Posterior cingulate gyrus (tissue), 11 donors: ENCODE measurements at regions of chr6 and their contacts with region 1.

Region 1: GRCh38 chr6:35731736-35732532 is 4.9 kb upstream of the ARMC12 start:
- DNase-seq: peak; percentile 78 to 97 (median 88)

Region 2: DNA sequence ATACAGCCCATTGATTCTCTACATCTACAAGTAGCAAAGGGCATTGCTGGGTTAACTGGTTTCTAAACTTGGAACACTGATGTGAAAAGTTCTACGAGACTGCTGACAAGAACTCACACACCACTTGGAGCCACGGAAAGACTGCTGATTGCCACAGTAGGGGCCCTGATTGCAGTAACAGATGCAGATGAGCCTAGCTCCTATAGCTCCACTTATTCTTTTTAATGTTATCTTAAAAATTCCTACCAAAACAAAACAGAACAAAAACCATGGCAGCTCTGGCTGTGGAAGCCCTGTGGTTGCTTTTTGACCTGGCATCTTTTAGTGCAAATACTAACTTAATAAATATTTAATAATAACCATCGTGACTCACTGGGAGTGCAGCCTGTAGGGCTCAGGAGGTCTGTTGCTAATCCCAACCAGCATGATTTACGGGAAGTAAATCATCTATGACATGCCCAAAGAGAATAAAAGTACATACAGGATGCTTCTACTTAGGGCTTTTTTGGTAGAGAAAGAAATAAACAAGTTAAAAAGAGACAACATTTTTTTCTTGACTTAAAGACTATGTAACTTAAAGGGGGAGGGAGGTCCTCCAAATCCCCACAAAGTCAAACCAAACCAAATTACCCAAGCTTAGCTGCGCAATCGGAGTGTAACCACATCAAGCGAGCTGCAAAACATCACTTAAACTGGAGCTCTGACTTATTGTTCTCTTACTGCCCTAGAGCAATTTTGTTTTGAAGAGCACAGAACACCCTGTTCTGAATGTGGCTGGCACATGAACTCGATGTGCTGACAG is 130.4 kb before region 1 on chr6:
- intact Hi-C with region 1: loop called (anchors 5 kb)
- DNase-seq: peak in 6 of 10 donors; percentile 6 to 52 (median 29)

Region 3: GRCh38 chr6:35694462-35694861 is 37.5 kb before region 1 on chr6:
- intact Hi-C with region 1: no loop called
- DNase-seq: no peak